GM12878 (cell line): ENCODE measurements at regions of chr18 and their contacts with region 1.

Region 1: DNA sequence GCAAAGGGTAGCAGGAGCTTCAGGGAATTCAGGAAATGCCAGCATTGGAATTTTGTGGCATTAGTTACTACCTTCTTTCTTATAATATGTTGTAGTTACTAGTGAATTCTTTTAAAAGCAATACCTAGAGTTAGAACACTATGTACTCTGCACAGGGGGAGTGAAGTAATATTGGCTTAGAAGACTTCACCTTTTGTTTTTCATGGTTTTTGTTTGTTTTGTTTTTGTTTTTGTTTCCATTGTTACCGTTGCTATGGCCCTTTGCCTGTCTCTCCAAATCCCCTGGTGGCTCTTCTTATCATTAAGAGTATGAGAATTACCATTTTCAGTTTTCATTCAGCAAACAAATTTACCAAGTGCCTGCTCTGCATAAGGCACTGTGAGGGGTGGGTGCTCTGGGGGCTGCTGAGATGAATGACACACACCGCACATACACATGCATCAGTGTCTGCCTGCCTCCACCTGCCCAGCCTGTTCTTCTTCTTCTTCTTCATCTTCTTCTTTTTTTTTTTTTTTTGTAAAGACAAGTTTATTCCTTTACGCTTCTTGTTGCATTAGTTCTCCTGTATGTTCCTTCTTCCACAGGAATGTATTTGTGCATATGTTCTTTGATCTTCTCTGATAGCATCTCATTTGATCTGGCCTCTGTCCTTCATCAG is 160.2 kb downstream of the HAUS1 start:
- DNase-seq: no peak
- ATAC-seq: peak; percentile 66
- H3K4me3 ChIP-seq: no peak overlapping the region
- H3K27ac ChIP-seq: no peak overlapping the region
- H3K4me1 ChIP-seq: peaks cover 6% of the 10 kb centered on the region
- H3K27me3 ChIP-seq: no peaks in the 10 kb centered on the region
- CTCF ChIP-seq: no peak
- EP300 ChIP-seq: 0 out of 4 replicates have a peak, but pooled peaks of 1 of the 2 experiments have one; percentile 24
- POLR2A ChIP-seq: no peak
- RAD21 ChIP-seq: no peak

Region 2: GRCh38 chr18:45879681-45880655 is 384.4 kb before region 1 on chr18:
- CTCF ChIA-PET with region 1: no interaction called
- POLR2A ChIA-PET with region 1: no interaction called
- RAD21 ChIA-PET with region 1: no interaction called
- SMC1A ChIA-PET with region 1: no interaction called
- in situ Hi-C with region 1: no loop called
- intact Hi-C with region 1: no loop called
- DNase-seq: peak; percentile 17
- ATAC-seq: peak; percentile 96
- H3K4me3 ChIP-seq: no peak overlapping the region
- H3K27ac ChIP-seq: no peak overlapping the region
- H3K4me1 ChIP-seq: peaks cover 5% of the 10 kb centered on the region; the same call in 1 of the 2 replicates
- H3K27me3 ChIP-seq: no peaks in the 10 kb centered on the region
- CTCF ChIP-seq: peak; percentile 95 to 99 (median 99)
- EP300 ChIP-seq: no peak
- POLR2A ChIP-seq: no peak
- RAD21 ChIP-seq: peak; percentile 93

Region 3: GRCh38 chr18:46207985-46208384 is 56.4 kb before region 1 on chr18:
- CTCF ChIA-PET with region 1: no interaction called
- POLR2A ChIA-PET with region 1: interaction called, 10 read pairs
- RAD21 ChIA-PET with region 1: no interaction called
- SMC1A ChIA-PET with region 1: no interaction called
- in situ Hi-C with region 1: no loop called
- intact Hi-C with region 1: no loop called
- DNase-seq: no peak
- ATAC-seq: peak; percentile 30; the same call in 2 of the 3 replicates
- H3K4me3 ChIP-seq: no peak overlapping the region
- H3K27ac ChIP-seq: no peak overlapping the region
- H3K4me1 ChIP-seq: peaks cover 15% of the 10 kb centered on the region
- H3K27me3 ChIP-seq: no peaks in the 10 kb centered on the region
- CTCF ChIP-seq: no peak
- EP300 ChIP-seq: no peak
- POLR2A ChIP-seq: no peak
- RAD21 ChIP-seq: no peak

Region 4: GRCh38 chr18:46226461-46226860 is 37.9 kb before region 1 on chr18:
- CTCF ChIA-PET with region 1: no interaction called
- POLR2A ChIA-PET with region 1: no interaction called
- RAD21 ChIA-PET with region 1: no interaction called
- SMC1A ChIA-PET with region 1: no interaction called
- in situ Hi-C with region 1: no loop called
- intact Hi-C with region 1: no loop called
- DNase-seq: no peak
- ATAC-seq: no peak
- H3K4me3 ChIP-seq: no peak overlapping the region
- H3K27ac ChIP-seq: no peak overlapping the region
- H3K4me1 ChIP-seq: no peaks in the 10 kb centered on the region; the same call in 1 of the 2 replicates
- H3K27me3 ChIP-seq: no peaks in the 10 kb centered on the region
- CTCF ChIP-seq: no peak
- EP300 ChIP-seq: no peak
- POLR2A ChIP-seq: no peak
- RAD21 ChIP-seq: no peak

Region 5: GRCh38 chr18:46289463-46289862 is 25.1 kb after region 1 on chr18:
- CTCF ChIA-PET with region 1: no interaction called
- POLR2A ChIA-PET with region 1: no interaction called
- RAD21 ChIA-PET with region 1: no interaction called
- SMC1A ChIA-PET with region 1: no interaction called
- in situ Hi-C with region 1: no loop called
- intact Hi-C with region 1: no loop called
- DNase-seq: no peak
- ATAC-seq: no peak
- H3K4me3 ChIP-seq: no peak overlapping the region
- H3K27ac ChIP-seq: no peak overlapping the region
- H3K4me1 ChIP-seq: no peaks in the 10 kb centered on the region
- H3K27me3 ChIP-seq: no peaks in the 10 kb centered on the region
- CTCF ChIP-seq: no peak
- EP300 ChIP-seq: no peak
- POLR2A ChIP-seq: no peak
- RAD21 ChIP-seq: no peak